ENCODE measurements at regions of chr9 and their contacts with region 1.

Region 1: GRCh38 chr9:91433180-91433579 is 9.5 kb upstream of the NFIL3 start:
- DNase-seq: peak; percentile 39
- H3K4me3 ChIP-seq: no peak overlapping the region
- H3K27ac ChIP-seq: no peak overlapping the region
- H3K4me1 ChIP-seq: no peaks in the 10 kb centered on the region
- H3K27me3 ChIP-seq: no peaks in the 10 kb centered on the region
- CTCF ChIP-seq: peak; percentile 32

Region 2: DNA sequence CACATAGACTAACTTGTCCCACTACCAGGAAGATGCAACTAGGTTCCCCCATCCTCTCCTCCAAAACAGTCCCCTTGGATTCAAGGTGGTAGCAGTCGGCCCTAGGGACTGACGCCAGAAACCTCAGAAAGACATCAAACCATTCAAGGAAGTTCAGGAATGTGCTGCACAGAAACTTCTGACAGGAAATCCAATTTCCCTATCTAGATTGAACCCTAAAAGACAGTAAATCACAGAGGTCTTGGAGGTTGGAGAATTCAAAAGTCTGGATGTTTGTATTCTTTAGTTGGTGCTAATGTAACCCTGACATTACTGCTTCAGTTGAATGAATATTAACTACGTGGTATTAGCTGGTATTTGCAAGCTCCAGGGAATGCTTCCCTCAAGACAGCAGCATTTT is 506.3 kb before region 1 on chr9:
- intact Hi-C with region 1: no loop called
- DNase-seq: no peak
- H3K4me3 ChIP-seq: no peak overlapping the region
- H3K27ac ChIP-seq: no peak overlapping the region
- H3K4me1 ChIP-seq: no peaks in the 10 kb centered on the region
- H3K27me3 ChIP-seq: no peaks in the 10 kb centered on the region
- CTCF ChIP-seq: no peak

Region 3: GRCh38 chr9:91036826-91037510 is 396.2 kb before region 1 on chr9:
- intact Hi-C with region 1: loop called (anchors 2 kb)
- DNase-seq: peak; percentile 85
- H3K4me3 ChIP-seq: no peak overlapping the region
- H3K27ac ChIP-seq: peak overlapping the region; percentile 31
- H3K4me1 ChIP-seq: peaks cover 7% of the 10 kb centered on the region
- H3K27me3 ChIP-seq: no peaks in the 10 kb centered on the region
- CTCF ChIP-seq: peak; percentile 51

Region 4: DNA sequence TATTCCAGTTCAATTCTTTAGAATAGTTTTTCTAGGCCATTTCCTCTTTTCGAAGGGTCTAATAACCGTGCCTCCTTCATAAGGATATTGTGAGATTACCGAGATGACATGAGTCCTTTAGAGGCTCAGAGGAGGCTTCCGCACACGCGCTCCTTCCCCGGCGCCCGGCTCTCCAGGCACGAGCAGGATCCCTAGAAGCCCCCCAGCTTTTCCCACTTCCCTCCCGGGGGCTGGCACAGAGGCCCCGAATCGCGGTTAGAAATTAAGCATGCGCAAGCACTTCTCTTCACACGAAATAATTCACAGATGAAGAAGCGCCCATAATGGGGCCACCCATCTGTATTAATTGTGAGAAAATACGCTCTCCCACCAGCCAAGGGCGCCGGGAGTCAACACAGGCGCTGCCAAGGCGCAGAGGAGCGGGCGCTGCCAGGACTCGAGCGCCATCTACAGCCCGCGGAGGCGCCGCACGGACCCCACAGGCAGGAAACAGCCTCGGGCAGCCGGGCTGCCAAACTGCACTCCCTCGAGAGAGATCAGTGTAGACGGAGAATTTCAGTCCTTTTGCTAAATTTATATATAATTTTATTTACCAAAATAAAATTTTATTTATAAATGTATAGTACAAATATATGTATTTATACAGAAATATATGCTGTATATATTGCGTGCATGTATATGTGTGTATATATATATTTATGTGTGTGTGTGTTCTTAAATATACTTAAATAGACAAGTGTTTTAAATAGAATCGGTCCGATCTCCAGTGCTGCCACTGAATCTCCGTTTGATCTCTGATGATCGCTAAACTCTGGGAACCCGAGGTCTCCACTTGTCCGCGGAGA is 248.5 kb after region 1 on chr9:
- intact Hi-C with region 1: loop called (anchors 5 kb)
- DNase-seq: peak; percentile 64
- H3K4me3 ChIP-seq: no peak overlapping the region
- H3K27ac ChIP-seq: no peak overlapping the region
- H3K4me1 ChIP-seq: no peaks in the 10 kb centered on the region
- H3K27me3 ChIP-seq: no peaks in the 10 kb centered on the region
- CTCF ChIP-seq: peak; percentile 95

Measured in colonic mucosa (tissue), 4 donors.